OCI-LY7 (cell line): ENCODE measurements at regions of chr12 and their contacts with region 1.

Region 1: DNA sequence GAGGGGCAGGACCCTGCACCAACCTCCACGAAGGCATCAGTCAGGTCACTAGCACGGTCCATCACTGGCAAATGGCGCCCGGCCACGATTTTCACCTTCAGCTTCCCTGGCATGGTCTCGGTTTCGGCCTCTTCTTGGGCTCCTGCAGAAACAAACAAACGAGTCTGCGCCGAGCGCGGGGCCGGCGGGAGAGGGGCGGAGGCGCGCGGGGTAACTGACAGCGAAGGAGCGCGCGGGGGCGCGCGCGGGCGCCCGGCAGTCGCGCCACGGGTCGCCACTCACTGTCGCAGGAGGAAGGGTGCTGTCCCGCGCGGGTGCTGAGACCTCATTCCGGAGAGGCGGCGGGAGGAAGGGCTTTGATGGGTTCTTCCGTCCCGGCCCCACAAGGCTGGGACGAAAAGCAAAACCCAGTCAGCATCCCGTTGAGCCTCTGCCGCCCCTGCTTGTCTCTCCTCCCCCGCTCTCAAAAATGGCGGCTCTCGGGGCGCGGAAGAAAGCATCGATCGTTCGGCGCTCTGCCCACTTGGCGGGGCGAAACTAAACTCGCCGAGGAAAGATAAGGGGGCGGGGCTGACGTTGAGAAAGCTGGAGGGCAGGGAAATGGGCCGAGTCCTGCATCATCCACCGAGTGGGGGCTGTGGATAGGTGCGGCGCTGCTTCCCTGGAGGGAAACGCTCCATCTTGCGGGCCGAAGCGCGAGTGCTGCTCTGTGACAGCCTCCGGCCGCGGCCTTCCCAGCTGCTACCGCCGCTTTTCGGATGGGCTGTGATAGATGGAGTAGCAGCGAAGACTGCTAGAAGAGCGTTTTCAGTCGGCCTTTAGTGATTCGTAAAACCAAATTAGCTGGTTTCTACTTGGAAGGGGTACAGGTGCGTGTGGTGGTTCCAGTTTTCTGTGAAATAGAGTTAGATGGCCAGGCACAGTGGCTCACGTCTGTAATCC is at the start of gene C2CD5:
- DNase-seq: peak; percentile 96
- H3K4me3 ChIP-seq: peak within 1 kb of the TSS; percentile 94
- H3K27ac ChIP-seq: peak within 1 kb of the TSS; percentile 78
- H3K4me1 ChIP-seq: peaks cover 24% of the 10 kb centered on the region
- CTCF ChIP-seq: peak; percentile 52; the same call in 1 of the 2 replicates
- total RNA-seq, gene C2CD5: 19.7 and 28.4 TPM in 2 replicates

Region 2: DNA sequence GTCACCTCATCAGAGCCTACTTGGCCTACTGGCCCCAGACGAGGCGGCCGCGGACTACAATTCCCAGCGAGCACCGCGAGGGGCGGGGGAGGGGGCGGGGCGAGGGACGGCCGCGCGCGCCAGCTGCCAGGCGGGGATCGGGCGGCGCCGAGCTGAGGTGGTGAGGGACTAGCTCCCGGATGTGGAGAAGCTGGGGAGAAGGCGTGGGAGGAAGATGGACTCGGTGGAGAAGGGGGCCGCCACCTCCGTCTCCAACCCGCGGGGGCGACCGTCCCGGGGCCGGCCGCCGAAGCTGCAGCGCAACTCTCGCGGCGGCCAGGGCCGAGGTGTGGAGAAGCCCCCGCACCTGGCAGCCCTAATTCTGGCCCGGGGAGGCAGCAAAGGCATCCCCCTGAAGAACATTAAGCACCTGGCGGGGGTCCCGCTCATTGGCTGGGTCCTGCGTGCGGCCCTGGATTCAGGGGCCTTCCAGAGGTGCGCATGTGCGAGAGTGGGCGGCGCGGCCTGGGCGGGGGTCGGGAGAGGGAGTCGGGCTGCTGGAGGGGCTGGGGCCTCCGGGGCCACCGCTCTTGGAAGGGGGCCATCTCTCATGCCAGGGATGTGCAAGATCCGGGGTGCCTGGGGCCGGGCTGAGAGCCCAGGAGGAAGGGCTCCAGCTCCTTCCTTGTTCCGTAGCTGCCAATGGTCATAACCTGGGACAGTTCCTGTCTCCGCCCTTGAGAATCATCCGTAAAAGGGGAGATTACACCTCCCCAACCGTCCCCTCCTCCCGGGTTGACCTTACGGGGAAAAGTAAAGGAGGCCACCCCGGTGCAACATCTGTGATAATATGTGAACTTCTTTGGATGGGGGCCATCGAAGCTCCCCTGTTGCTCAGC is 498.0 kb before region 1 on chr12 and contains the start of gene CMAS:
- CTCF ChIA-PET with region 1: no interaction called
- POLR2A ChIA-PET with region 1: no interaction called
- intact Hi-C with region 1: loop called (anchors 10 kb)
- DNase-seq: peak; percentile 78
- H3K4me3 ChIP-seq: peak within 1 kb of the TSS; percentile 98
- H3K27ac ChIP-seq: peak within 1 kb of the TSS; percentile 52
- H3K4me1 ChIP-seq: peaks cover 4% of the 10 kb centered on the region
- CTCF ChIP-seq: no peak
- total RNA-seq, gene CMAS: 19.9 and 22.2 TPM in 2 replicates